ENCODE measurements at regions of chr3 and their contacts with region 1.

Region 1: GRCh38 chr3:12994607-12995388 is 78.4 kb downstream of the IQSEC1 start:
- DNase-seq: peak; percentile 76 to 92 (median 83)
- ATAC-seq: peak; percentile 86
- H3K4me3 ChIP-seq: peak overlapping the region; percentile 69
- H3K4me3 Mint-ChIP-seq: peak overlapping the region; percentile 91 to 97 (median 95)
- H3K27ac ChIP-seq: peak overlapping the region; percentile 77
- H3K27ac Mint-ChIP-seq: peak overlapping the region; percentile 85 to 96 (median 90)
- H3K4me1 ChIP-seq: peaks cover 20 to 30% of the 10 kb centered on the region in 2 donors
- H3K4me1 Mint-ChIP-seq: peaks cover 23 to 80% (median 71%) of the 10 kb centered on the region in 7 donors
- H3K27me3 ChIP-seq: no peaks in the 10 kb centered on the region
- H3K27me3 Mint-ChIP-seq: peaks cover 0 to 5% (median 0%) of the 10 kb centered on the region in 5 donors

Region 2: GRCh38 chr3:12868039-12869034 is 126.5 kb before region 1 on chr3:
- CTCF ChIA-PET with region 1: interaction called, 5 read pairs
- POLR2A ChIA-PET with region 1: no interaction called
- intact Hi-C with region 1: loop called (anchors 1 kb)
- DNase-seq: peak; percentile 32 to 68 (median 50)
- ATAC-seq: peak; percentile 87
- H3K4me3 ChIP-seq: peak overlapping the region; percentile 60
- H3K4me3 Mint-ChIP-seq: peak overlapping the region; percentile 79 to 92 (median 86)
- H3K27ac ChIP-seq: no peak overlapping the region
- H3K27ac Mint-ChIP-seq: peak overlapping the region in 2 of 9 donors; percentile 4 to 53
- H3K4me1 ChIP-seq: no peaks in the 10 kb centered on the region
- H3K4me1 Mint-ChIP-seq: peaks cover 0 to 14% (median 10%) of the 10 kb centered on the region in 7 donors
- H3K27me3 ChIP-seq: peaks cover 0 to 5% of the 10 kb centered on the region in 2 donors
- H3K27me3 Mint-ChIP-seq: peaks cover 9 to 35% (median 14%) of the 10 kb centered on the region in 5 donors

Region 3: GRCh38 chr3:12967606-12968351 is 27.0 kb before region 1 on chr3:
- CTCF ChIA-PET with region 1: interaction called, 3 read pairs
- POLR2A ChIA-PET with region 1: interaction called, 4 read pairs
- intact Hi-C with region 1: loop called (anchors 1 kb)
- DNase-seq: peak; percentile 71 to 87 (median 83)
- ATAC-seq: peak; percentile 99
- H3K4me3 ChIP-seq: peak overlapping the region; percentile 47
- H3K4me3 Mint-ChIP-seq: peak overlapping the region; percentile 74 to 87 (median 86)
- H3K27ac ChIP-seq: peak overlapping the region; percentile 29
- H3K27ac Mint-ChIP-seq: peak overlapping the region in 4 of 9 donors; percentile 9 to 84 (median 60)
- H3K4me1 ChIP-seq: peaks cover 47 to 53% of the 10 kb centered on the region in 2 donors
- H3K4me1 Mint-ChIP-seq: peaks cover 50 to 86% (median 77%) of the 10 kb centered on the region in 7 donors
- H3K27me3 ChIP-seq: no peaks in the 10 kb centered on the region
- H3K27me3 Mint-ChIP-seq: peaks cover 0 to 5% (median 0%) of the 10 kb centered on the region in 5 donors

Region 4: GRCh38 chr3:13025094-13025493 is 30.3 kb after region 1 on chr3:
- CTCF ChIA-PET with region 1: no interaction called
- POLR2A ChIA-PET with region 1: no interaction called
- intact Hi-C with region 1: no loop called
- DNase-seq: no peak
- ATAC-seq: peak; percentile 67
- H3K4me3 ChIP-seq: no peak overlapping the region
- H3K4me3 Mint-ChIP-seq: no peak overlapping the region
- H3K27ac ChIP-seq: no peak overlapping the region
- H3K27ac Mint-ChIP-seq: no peak overlapping the region
- H3K4me1 ChIP-seq: no peaks in the 10 kb centered on the region
- H3K4me1 Mint-ChIP-seq: peaks cover 0 to 10% (median 0%) of the 10 kb centered on the region in 7 donors
- H3K27me3 ChIP-seq: no peaks in the 10 kb centered on the region
- H3K27me3 Mint-ChIP-seq: no peaks in the 10 kb centered on the region

Region 5: DNA sequence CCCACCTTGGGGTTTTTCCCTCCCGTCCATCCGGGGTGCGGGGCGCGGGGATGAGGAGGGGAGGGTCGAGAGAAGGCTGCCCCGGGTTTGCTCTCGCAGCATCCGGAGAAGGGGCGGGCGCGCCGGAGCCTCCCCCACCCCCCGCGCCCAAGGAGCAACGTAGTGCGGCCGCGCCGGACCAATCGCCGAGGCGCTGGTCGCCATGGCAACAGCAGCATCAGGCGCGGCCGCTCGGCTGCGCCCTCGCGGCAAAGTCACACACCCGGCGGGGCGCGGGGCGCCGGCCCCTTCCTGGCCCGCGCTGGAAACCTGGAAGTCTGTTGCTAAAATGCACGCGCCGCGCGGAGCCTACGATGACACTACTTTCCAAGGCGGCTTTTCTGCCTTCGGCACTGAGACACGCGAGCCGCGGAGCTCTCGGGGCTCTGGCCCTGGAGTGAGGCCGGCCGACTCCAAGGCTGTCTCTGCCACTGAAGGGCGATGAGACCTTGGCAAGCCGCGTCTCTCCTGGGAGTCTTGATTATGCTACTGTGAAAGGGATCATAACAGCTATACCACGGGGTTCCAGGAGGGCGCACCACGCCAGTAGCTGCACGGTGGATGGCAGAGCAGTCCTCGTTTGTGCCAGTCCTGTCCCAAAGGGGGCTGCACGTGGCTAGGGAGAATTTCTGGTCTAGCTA is 78.7 kb after region 1 on chr3 and contains the start of gene IQSEC1:
- CTCF ChIA-PET with region 1: interaction called, 3 read pairs
- POLR2A ChIA-PET with region 1: interaction called, 3 read pairs
- intact Hi-C with region 1: loop called (anchors 1 to 2 kb)
- DNase-seq: peak; percentile 15 to 70 (median 51)
- ATAC-seq: peak; percentile 80
- H3K4me3 ChIP-seq: peak within 1 kb of the TSS; percentile 53
- H3K4me3 Mint-ChIP-seq: peak within 1 kb of the TSS; percentile 59 to 86 (median 77)
- H3K27ac ChIP-seq: no peak within 1 kb of the TSS
- H3K27ac Mint-ChIP-seq: peak within 1 kb of the TSS in 6 of 9 donors; percentile 36 to 77 (median 60)
- H3K4me1 ChIP-seq: peaks cover 28 to 35% of the 10 kb centered on the region in 2 donors
- H3K4me1 Mint-ChIP-seq: peaks cover 18 to 46% (median 39%) of the 10 kb centered on the region in 7 donors
- H3K27me3 ChIP-seq: peaks cover 0 to 3% of the 10 kb centered on the region in 2 donors
- H3K27me3 Mint-ChIP-seq: peaks cover 8 to 45% (median 12%) of the 10 kb centered on the region in 5 donors
- total RNA-seq, gene IQSEC1: 51.8 to 163 (median 79.5) TPM

Region 6: DNA sequence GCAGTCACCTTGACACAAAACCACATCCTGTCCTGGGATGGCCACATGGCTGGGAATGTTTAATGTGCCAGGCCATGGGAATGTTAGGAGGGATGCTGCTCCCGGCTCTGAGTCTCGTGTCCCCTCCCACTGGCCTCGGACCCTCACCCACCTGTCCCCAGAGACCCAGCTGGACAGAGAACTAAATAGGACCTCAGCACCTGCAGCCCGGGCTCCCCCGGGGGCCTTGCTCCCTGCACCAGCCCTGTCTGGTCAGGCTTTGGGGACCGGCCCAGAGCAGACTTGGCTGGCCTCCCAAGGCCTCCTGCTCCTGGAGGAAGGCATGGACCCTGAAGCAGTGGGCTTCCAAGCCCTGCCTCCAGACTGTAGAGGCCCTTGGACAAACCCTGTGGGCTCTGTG is 178.4 kb after region 1 on chr3:
- CTCF ChIA-PET with region 1: no interaction called
- POLR2A ChIA-PET with region 1: no interaction called
- intact Hi-C with region 1: no loop called
- DNase-seq: no peak
- ATAC-seq: no peak
- H3K4me3 ChIP-seq: no peak overlapping the region
- H3K4me3 Mint-ChIP-seq: no peak overlapping the region
- H3K27ac ChIP-seq: no peak overlapping the region
- H3K27ac Mint-ChIP-seq: no peak overlapping the region
- H3K4me1 ChIP-seq: no peaks in the 10 kb centered on the region
- H3K4me1 Mint-ChIP-seq: no peaks in the 10 kb centered on the region
- H3K27me3 ChIP-seq: no peaks in the 10 kb centered on the region
- H3K27me3 Mint-ChIP-seq: peaks cover 0 to 8% (median 0%) of the 10 kb centered on the region in 5 donors

Measured in naive thymus-derived CD4-positive, alpha-beta T cell (primary cell).